ENCODE measurements at regions of chr16 and their contacts with region 1.

Region 1: GRCh38 chr16:22284637-22285036 is 12.6 kb upstream of the POLR3E start:
- DNase-seq: peak in 1 of 5 donors; percentile 53
- H3K4me3 ChIP-seq: no peak overlapping the region
- H3K27ac ChIP-seq: no peak overlapping the region
- H3K4me1 ChIP-seq: no peaks in the 10 kb centered on the region
- H3K27me3 ChIP-seq: no peaks in the 10 kb centered on the region
- CTCF ChIP-seq: no peak

Region 2: GRCh38 chr16:22217889-22218730 is 66.5 kb before region 1 on chr16:
- intact Hi-C with region 1: loop called (anchors 10 kb)
- DNase-seq: no peak
- H3K4me3 ChIP-seq: no peak overlapping the region
- H3K27ac ChIP-seq: no peak overlapping the region
- H3K4me1 ChIP-seq: no peaks in the 10 kb centered on the region
- H3K27me3 ChIP-seq: no peaks in the 10 kb centered on the region
- CTCF ChIP-seq: no peak

Measured in kidney (tissue), 22 donors.